MCF 10A (cell line): ENCODE measurements at regions of chr1 and their contacts with region 1.

Region 1: GRCh38 chr1:119870917-119871596 is 25.3 kb downstream of the ADAM30 start:
- DNase-seq: peak; percentile 77
- H3K4me3 Mint-ChIP-seq: no peak overlapping the region
- H3K27ac Mint-ChIP-seq: peak overlapping the region; percentile 59
- H3K4me1 Mint-ChIP-seq: peaks cover 6% of the 10 kb centered on the region
- H3K27me3 Mint-ChIP-seq: no peaks in the 10 kb centered on the region
- CTCF ChIP-seq: peak; percentile 98

Region 2: GRCh38 chr1:119435052-119435451 is 436.0 kb before region 1 on chr1:
- CTCF ChIA-PET with region 1: no interaction called
- POLR2A ChIA-PET with region 1: no interaction called
- intact Hi-C with region 1: no loop called
- DNase-seq: peak; percentile 44
- H3K4me3 Mint-ChIP-seq: no peak overlapping the region
- H3K27ac Mint-ChIP-seq: no peak overlapping the region
- H3K4me1 Mint-ChIP-seq: no peaks in the 10 kb centered on the region
- H3K27me3 Mint-ChIP-seq: peaks cover 39% of the 10 kb centered on the region
- CTCF ChIP-seq: no peak

Region 3: DNA sequence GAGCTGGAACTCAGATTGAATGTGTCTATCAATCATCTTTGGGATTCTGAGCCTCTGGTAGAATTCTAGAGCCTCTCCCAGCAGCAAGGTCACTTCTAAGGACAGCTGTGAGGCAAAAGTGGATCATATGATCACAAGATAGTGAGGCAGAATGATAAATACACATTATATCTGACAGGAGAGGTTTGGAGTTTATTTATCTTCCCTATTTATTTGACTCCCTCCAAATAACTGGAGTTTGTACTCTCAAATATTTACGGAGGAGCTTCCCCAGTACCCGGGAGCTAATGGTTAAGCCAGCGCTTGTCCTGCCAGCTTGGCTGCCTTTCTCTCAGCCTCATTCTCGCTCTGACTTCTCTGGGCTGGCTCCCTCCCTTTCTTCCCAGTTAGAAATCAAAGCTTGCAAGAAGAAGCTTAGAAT is 104.7 kb before region 1 on chr1:
- CTCF ChIA-PET with region 1: no interaction called
- POLR2A ChIA-PET with region 1: no interaction called
- intact Hi-C with region 1: no loop called
- DNase-seq: no peak
- H3K4me3 Mint-ChIP-seq: no peak overlapping the region
- H3K27ac Mint-ChIP-seq: no peak overlapping the region
- H3K4me1 Mint-ChIP-seq: peaks cover 5% of the 10 kb centered on the region
- H3K27me3 Mint-ChIP-seq: no peaks in the 10 kb centered on the region
- CTCF ChIP-seq: no peak

Region 4: GRCh38 chr1:119859647-119860046 is 11.4 kb before region 1 on chr1:
- CTCF ChIA-PET with region 1: interaction called, 15 read pairs
- POLR2A ChIA-PET with region 1: no interaction called
- intact Hi-C with region 1: no loop called
- DNase-seq: peak; percentile 48
- H3K4me3 Mint-ChIP-seq: no peak overlapping the region
- H3K27ac Mint-ChIP-seq: no peak overlapping the region
- H3K4me1 Mint-ChIP-seq: no peaks in the 10 kb centered on the region
- H3K27me3 Mint-ChIP-seq: peaks cover 11% of the 10 kb centered on the region
- CTCF ChIP-seq: no peak

Region 5: DNA sequence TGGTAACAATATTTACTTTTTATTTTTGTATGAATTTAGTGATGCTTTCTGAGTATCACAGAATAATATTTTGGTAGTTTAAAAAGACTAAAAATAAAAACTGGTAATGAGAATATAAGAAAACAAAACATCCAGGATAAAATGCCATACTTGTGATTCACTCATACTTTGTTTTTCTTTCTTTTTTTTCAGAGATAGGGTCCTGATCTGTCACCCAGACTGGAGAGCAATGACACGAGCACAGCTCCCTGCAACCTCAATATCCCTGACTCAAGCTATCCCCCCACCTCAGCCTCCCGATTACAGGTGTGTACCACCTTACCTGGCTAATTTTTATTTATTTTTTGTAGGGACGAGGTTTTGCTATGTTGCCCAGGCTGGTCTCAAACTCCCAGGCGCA is 89.4 kb after region 1 on chr1:
- CTCF ChIA-PET with region 1: no interaction called
- POLR2A ChIA-PET with region 1: no interaction called
- intact Hi-C with region 1: no loop called
- DNase-seq: no peak
- H3K4me3 Mint-ChIP-seq: no peak overlapping the region
- H3K27ac Mint-ChIP-seq: no peak overlapping the region
- H3K4me1 Mint-ChIP-seq: peaks cover 18% of the 10 kb centered on the region
- H3K27me3 Mint-ChIP-seq: no peaks in the 10 kb centered on the region
- CTCF ChIP-seq: no peak